Common myeloid progenitor, CD34-positive (primary cell): ENCODE measurements at regions of chr13 and their contacts with region 1.

Region 1: DNA sequence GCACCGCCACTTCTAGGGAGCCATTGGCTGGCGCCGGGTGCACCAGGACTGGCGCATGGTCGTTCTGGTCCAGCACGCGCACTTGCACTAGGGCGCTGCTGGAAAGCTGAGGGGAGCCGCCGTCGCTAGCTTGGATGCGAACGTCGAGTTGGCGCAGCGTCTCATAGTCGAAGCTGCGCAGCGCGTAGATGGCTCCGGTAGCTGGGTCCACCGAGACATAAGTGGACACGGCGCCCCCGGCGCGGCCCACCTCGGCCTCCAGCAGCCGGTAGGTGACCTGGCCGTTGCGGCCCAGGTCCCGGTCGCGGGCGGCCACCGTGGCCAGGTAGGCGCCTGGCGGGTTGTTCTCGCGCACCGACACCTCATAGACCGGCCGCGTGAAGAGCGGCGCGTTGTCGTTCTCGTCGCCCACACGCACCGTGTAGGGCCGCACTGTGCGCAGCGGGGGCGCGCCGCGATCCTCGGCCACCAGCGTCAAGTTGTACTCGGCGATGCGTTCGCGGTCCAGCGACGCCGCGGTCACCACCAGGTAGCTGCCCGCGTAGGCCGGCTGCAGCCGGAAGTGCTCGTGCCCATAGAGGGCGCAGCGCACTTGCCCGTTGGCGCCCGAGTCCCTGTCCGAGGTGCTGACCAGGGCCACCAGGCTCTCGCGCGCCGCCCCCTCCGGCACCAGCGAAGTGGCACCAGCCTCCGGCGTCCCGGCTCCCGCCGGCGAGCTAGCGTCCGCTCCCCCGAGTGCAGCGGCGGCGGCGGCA is 1.7 kb downstream of the PCDH8 start:
- DNase-seq: peak; percentile 67 to 85 (median 82)
- H3K4me3 ChIP-seq: peak overlapping the region in 5 of 7 experiments; percentile 29 to 70 (median 55)
- H3K27ac ChIP-seq: no peak overlapping the region
- H3K4me1 ChIP-seq: peaks cover 1 to 48% (median 41%) of the 10 kb centered on the region in 4 experiments
- H3K27me3 ChIP-seq: peaks cover 13 to 94% (median 53%) of the 10 kb centered on the region in 5 experiments

Region 2: DNA sequence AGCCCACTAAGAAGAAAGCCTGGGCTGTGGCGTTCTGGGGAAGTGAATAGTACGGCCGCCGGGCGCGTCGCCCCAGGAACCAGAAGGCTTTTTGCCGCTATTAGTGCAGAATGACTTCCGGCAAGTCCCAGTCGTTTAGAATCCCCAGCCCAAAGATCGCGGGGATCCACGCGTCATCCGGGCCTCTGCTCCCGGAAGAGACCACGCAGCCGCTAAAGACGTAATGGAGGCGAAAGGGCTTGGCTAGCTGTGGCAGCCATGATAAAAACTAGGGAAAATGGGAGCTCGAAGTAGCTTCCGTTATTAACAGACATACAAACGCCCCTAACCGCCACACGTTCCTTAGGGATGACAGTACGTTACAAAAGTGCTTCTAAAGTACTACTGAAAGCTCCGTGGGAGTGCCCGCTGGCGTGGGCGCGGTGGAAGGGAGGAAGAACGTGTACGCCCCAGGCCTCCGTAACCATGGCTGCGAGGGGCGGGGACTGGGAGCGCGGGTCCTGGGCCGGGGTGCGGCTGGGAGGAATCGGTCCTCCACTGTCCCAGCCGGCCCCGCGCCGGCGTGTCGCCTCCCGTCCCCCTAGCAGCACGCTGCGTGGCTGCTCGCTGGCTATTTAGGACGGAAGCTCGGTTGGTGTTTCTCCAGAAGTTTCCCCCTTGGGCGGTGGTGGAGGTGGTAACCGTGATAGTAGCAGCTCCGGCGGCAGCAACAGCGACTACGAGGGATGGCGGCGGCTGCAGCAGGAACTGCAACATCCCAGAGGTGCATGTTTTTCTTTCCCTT is 194.4 kb before region 1 on chr13 and contains the start of gene SUGT1:
- CTCF ChIA-PET with region 1: interaction called, 12 read pairs
- POLR2A ChIA-PET with region 1: no interaction called
- DNase-seq: peak; percentile 98 to 100 (median 99)
- H3K4me3 ChIP-seq: peak within 1 kb of the TSS; percentile 87 to 98 (median 93)
- H3K27ac ChIP-seq: peak within 1 kb of the TSS; percentile 99 to 100
- H3K4me1 ChIP-seq: peaks cover 15 to 28% (median 17%) of the 10 kb centered on the region in 4 experiments
- H3K27me3 ChIP-seq: no peaks in the 10 kb centered on the region

Region 3: GRCh38 chr13:52665325-52665724 is 181.4 kb before region 1 on chr13:
- CTCF ChIA-PET with region 1: interaction called, 32 read pairs
- POLR2A ChIA-PET with region 1: no interaction called
- DNase-seq: peak; percentile 46 to 71 (median 67)
- H3K4me3 ChIP-seq: no peak overlapping the region
- H3K27ac ChIP-seq: no peak overlapping the region
- H3K4me1 ChIP-seq: no peaks in the 10 kb centered on the region
- H3K27me3 ChIP-seq: no peaks in the 10 kb centered on the region

Region 4: GRCh38 chr13:52786747-52787146 is 60.0 kb before region 1 on chr13:
- CTCF ChIA-PET with region 1: no interaction called
- POLR2A ChIA-PET with region 1: no interaction called
- DNase-seq: no peak
- H3K4me3 ChIP-seq: no peak overlapping the region
- H3K27ac ChIP-seq: no peak overlapping the region
- H3K4me1 ChIP-seq: no peaks in the 10 kb centered on the region
- H3K27me3 ChIP-seq: peaks cover 0 to 6% (median 0%) of the 10 kb centered on the region in 5 experiments

Region 5: DNA sequence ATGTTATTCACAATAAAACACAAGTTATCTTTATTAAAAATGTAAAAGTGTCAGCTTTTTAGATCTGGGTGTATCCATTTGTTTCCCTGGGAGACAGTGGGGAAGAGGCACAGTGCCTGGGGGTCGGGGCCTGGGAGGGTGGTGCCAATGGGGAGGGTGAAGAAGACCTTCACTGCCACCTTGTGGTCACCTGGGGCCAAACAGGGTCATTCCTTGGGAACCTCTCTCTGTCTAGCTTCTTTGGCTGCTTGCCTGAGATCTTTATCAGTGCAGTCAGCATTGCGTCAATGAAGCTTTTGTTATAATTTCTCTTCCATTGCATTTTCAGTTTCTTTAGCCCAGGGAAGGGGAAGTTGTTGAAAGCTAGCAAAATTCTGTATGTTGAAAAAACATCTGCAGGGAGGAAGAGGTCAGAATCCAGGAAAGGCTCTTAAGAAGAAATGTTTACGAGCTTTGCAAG is 37.4 kb before region 1 on chr13:
- CTCF ChIA-PET with region 1: interaction called, 16 read pairs
- POLR2A ChIA-PET with region 1: no interaction called
- DNase-seq: peak; percentile 95 to 97 (median 95)
- H3K4me3 ChIP-seq: peak overlapping the region in 1 of 7 experiments; percentile 2
- H3K27ac ChIP-seq: no peak overlapping the region
- H3K4me1 ChIP-seq: peaks cover 5 to 14% (median 8%) of the 10 kb centered on the region in 4 experiments
- H3K27me3 ChIP-seq: no peaks in the 10 kb centered on the region

Region 6: GRCh38 chr13:52835071-52835839 is 11.5 kb before region 1 on chr13:
- CTCF ChIA-PET with region 1: interaction called, 15 read pairs
- POLR2A ChIA-PET with region 1: no interaction called
- DNase-seq: peak in 2 of 3 donors; percentile 23 to 41
- H3K4me3 ChIP-seq: peak overlapping the region in 1 of 7 experiments; percentile 15
- H3K27ac ChIP-seq: no peak overlapping the region
- H3K4me1 ChIP-seq: no peaks in the 10 kb centered on the region
- H3K27me3 ChIP-seq: peaks cover 0 to 26% (median 2%) of the 10 kb centered on the region in 5 experiments

Region 7: DNA sequence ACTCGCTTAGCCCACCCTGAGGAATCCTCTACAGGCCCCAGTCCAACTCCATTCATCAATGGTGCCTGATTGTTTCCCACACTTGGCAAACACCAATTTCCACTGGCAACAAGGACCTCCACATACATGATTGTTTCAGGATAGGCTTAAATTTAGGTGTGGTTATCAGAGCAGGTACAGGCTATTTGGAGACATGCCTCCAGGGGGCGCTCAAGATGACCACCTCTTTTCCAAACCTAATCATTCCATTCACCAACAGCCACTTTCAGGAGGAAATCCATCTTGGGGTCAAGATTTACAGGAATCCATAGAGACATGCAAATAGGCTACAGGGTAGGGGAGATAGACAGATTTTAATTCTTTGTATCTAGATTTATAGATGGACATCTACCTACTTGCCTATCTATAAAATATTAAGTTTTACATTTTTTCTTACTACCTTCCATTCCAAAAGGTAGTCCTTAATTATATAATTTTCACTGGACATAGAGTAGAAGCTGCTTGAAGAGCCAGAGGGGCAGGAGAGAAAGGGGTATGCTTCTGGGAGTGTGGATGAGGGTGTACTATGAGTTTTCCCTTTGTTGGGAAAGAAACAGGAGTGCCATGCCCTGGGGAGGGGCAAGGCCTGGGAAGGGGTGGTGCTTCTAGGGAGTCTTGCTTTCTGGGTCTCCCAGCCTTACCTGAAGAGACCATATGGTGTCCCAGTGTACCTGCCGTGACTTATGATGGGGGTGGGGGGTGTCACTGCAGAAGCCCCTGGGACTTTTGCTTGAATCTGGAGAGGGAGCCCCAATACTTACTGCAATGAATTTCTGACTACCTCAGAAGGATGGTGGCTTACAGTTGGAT is 15.8 kb after region 1 on chr13:
- CTCF ChIA-PET with region 1: interaction called, 10 read pairs
- POLR2A ChIA-PET with region 1: no interaction called
- DNase-seq: peak in 2 of 3 donors; percentile 36 to 56
- H3K4me3 ChIP-seq: no peak overlapping the region
- H3K27ac ChIP-seq: no peak overlapping the region
- H3K4me1 ChIP-seq: no peaks in the 10 kb centered on the region
- H3K27me3 ChIP-seq: peaks cover 0 to 4% (median 2%) of the 10 kb centered on the region in 5 experiments

Region 8: GRCh38 chr13:52968074-52968700 is 121.4 kb after region 1 on chr13:
- CTCF ChIA-PET with region 1: interaction called, 20 read pairs
- POLR2A ChIA-PET with region 1: no interaction called
- DNase-seq: peak; percentile 64 to 85 (median 83)
- H3K4me3 ChIP-seq: no peak overlapping the region
- H3K27ac ChIP-seq: no peak overlapping the region
- H3K4me1 ChIP-seq: no peaks in the 10 kb centered on the region
- H3K27me3 ChIP-seq: peaks cover 0 to 9% (median 3%) of the 10 kb centered on the region in 5 experiments

Region 9: DNA sequence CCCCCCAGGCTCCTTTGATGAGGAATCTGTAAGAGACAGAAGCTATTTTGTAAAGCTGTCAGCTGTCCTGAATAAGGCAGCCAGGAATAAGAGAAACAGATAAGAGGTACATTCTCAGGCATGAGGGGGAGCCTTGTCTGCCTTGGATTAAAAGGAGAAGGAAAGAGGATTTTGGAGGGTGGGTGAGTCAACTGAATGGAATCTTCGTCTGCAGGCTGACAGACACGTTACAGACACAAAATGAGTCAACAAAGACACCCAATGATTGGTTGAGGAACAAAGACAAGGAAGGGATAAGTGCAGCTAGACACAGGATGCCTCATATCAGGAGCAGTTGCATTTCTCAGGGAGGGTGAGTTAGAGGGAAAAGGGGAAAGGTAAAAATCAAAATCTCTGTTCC is 344.3 kb after region 1 on chr13:
- CTCF ChIA-PET with region 1: no interaction called
- POLR2A ChIA-PET with region 1: no interaction called
- DNase-seq: no peak
- H3K4me3 ChIP-seq: no peak overlapping the region
- H3K27ac ChIP-seq: no peak overlapping the region
- H3K4me1 ChIP-seq: no peaks in the 10 kb centered on the region
- H3K27me3 ChIP-seq: peaks cover 0 to 17% (median 0%) of the 10 kb centered on the region in 5 experiments